BJ (cell line): ENCODE measurements at regions of chr18 and their contacts with region 1.

Region 1: GRCh38 chr18:7177116-7177744 is 53.7 kb upstream of the LRRC30 start:
- DNase-seq: peak; percentile 24
- H3K4me3 ChIP-seq: no peak overlapping the region
- H3K27me3 ChIP-seq: no peaks in the 10 kb centered on the region
- CTCF ChIP-seq: peak; percentile 81

Region 2: GRCh38 chr18:7000484-7001096 is 176.6 kb before region 1 on chr18:
- CTCF ChIA-PET with region 1: interaction called, 10 read pairs
- POLR2A ChIA-PET with region 1: no interaction called
- DNase-seq: no peak
- H3K4me3 ChIP-seq: no peak overlapping the region
- H3K27me3 ChIP-seq: no peaks in the 10 kb centered on the region
- CTCF ChIP-seq: peak; percentile 73

Region 3: DNA sequence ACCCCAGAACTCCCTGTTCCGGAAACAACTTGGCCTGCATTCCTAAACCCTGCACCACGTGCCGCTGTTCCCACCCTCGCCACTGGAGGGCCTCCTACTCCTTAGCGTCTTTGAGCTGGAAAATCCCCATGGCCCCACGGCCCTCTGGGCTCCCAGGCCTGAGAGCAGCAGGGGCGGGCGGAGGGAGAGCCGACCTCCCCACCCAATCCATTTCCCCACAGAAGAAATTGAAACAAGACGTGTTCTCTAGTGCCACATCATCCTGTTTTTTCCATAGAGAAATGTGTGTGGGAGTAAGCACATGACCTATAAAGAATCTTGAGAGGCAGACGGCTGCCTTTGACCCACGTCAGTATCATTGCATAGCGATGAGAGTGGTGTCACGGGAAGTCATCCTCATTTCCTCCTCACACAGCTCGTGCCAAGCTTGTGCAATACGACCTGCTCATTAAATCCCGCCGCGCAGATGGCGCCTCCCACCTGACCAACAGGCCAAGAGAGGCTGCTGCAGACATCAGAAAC is 138.8 kb before region 1 on chr18:
- CTCF ChIA-PET with region 1: interaction called, 56 read pairs
- POLR2A ChIA-PET with region 1: interaction called, 3 read pairs
- DNase-seq: peak; percentile 99
- H3K4me3 ChIP-seq: peak overlapping the region; percentile 18
- H3K27me3 ChIP-seq: no peaks in the 10 kb centered on the region
- CTCF ChIP-seq: peak; percentile 88

Region 4: GRCh38 chr18:7164323-7165004 is 12.8 kb before region 1 on chr18:
- CTCF ChIA-PET with region 1: interaction called, 31 read pairs
- POLR2A ChIA-PET with region 1: no interaction called
- DNase-seq: no peak
- H3K4me3 ChIP-seq: no peak overlapping the region
- H3K27me3 ChIP-seq: no peaks in the 10 kb centered on the region
- CTCF ChIP-seq: peak; percentile 41